ENCODE measurements at regions of chr9 and their contacts with region 1.

Region 1: GRCh38 chr9:22452415-22453010 is 5.9 kb downstream of the DMRTA1 start:
- DNase-seq: peak; percentile 31
- ATAC-seq: peak; percentile 83
- H3K4me3 ChIP-seq: no peak overlapping the region
- H3K27ac ChIP-seq: no peak overlapping the region
- H3K4me1 ChIP-seq: no peaks in the 10 kb centered on the region
- H3K27me3 ChIP-seq: peaks cover 9% of the 10 kb centered on the region
- CTCF ChIP-seq: peak; percentile 79
- POLR2A ChIP-seq: no peak
- RAD21 ChIP-seq: peak; percentile 64

Region 2: GRCh38 chr9:22060831-22061383 is 391.6 kb before region 1 on chr9:
- CTCF ChIA-PET with region 1: no interaction called
- POLR2A ChIA-PET with region 1: no interaction called
- dilution Hi-C with region 1: no loop called
- in situ Hi-C with region 1: no loop called
- intact Hi-C with region 1: loop called (anchors 10 kb)
- DNase-seq: no peak
- ATAC-seq: no peak
- H3K4me3 ChIP-seq: no peak overlapping the region
- H3K27ac ChIP-seq: no peak overlapping the region
- H3K4me1 ChIP-seq: no peaks in the 10 kb centered on the region
- H3K27me3 ChIP-seq: no peaks in the 10 kb centered on the region
- CTCF ChIP-seq: no peak
- POLR2A ChIP-seq: no peak
- RAD21 ChIP-seq: no peak

Region 3: DNA sequence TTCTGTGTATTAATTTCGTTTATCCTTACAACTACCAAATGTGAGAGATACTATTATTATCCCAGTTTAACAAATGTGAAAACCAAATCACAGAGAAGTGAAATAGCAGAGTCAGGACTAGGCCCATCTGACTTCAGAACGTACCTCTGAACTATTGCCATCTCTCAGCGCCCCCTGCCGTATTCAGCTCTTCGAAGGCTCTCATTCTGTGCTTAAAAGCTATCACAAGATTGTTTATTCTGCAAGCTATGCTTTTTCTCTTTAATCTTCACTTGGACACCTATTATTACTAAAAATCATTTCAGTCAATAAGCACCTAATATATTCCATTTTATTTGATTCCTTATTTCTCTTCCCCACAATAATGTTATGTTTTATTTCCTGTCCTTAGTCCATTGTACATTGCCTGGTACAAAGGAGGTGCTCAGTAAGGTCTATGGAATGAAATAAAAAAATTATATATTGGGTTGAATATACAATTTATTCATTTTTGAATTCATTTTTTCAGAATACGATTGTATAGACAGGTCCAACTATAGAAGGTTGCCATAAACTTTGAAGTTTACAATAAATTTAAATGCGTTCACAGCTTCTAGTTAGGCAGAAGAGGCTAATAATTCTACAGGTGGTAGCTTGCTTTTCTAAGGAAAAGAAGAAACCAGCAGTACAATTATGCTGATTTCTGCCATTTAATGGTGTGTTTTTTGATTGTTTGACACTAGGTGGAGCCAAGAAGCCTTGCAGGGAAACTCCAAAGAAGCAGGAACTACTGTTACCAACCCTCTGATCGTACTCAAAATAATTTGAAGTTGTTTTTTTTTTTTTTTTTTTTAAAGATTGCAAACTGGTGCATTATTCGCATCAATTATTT is 208.1 kb before region 1 on chr9:
- CTCF ChIA-PET with region 1: interaction called, 7 read pairs
- POLR2A ChIA-PET with region 1: no interaction called
- dilution Hi-C with region 1: no loop called
- in situ Hi-C with region 1: no loop called
- intact Hi-C with region 1: loop called (anchors 1 kb)
- DNase-seq: peak; percentile 63
- ATAC-seq: peak; percentile 92
- H3K4me3 ChIP-seq: no peak overlapping the region
- H3K27ac ChIP-seq: no peak overlapping the region
- H3K4me1 ChIP-seq: no peaks in the 10 kb centered on the region
- H3K27me3 ChIP-seq: peaks cover 3% of the 10 kb centered on the region
- CTCF ChIP-seq: peak; percentile 67
- POLR2A ChIP-seq: no peak
- RAD21 ChIP-seq: peak; percentile 67

Region 4: DNA sequence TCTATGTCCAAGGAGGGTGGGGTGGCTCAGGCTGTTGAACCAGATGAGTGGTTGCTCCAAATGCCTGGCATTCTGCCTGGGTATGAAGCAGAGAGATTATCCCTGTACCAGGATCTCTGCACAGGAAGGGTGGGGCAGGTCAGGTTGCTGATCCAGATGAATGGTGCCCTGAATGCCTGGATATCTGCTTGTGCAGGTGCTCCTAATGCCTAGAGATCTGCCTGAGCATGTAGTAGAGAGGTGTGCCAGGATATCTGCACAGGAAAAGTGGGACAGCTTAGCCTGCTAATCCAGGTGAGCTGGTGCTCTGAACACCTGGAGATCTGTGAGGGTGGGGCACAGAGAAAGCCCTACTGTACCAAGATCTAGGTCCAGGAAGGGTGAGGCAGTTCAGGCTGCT is 195.5 kb before region 1 on chr9:
- CTCF ChIA-PET with region 1: no interaction called
- POLR2A ChIA-PET with region 1: no interaction called
- dilution Hi-C with region 1: no loop called
- in situ Hi-C with region 1: loop called (anchors 10 kb)
- intact Hi-C with region 1: no loop called
- DNase-seq: no peak
- ATAC-seq: no peak
- H3K4me3 ChIP-seq: no peak overlapping the region
- H3K27ac ChIP-seq: no peak overlapping the region
- H3K4me1 ChIP-seq: no peaks in the 10 kb centered on the region
- H3K27me3 ChIP-seq: peaks cover 7% of the 10 kb centered on the region
- CTCF ChIP-seq: no peak
- POLR2A ChIP-seq: no peak
- RAD21 ChIP-seq: no peak

Region 5: DNA sequence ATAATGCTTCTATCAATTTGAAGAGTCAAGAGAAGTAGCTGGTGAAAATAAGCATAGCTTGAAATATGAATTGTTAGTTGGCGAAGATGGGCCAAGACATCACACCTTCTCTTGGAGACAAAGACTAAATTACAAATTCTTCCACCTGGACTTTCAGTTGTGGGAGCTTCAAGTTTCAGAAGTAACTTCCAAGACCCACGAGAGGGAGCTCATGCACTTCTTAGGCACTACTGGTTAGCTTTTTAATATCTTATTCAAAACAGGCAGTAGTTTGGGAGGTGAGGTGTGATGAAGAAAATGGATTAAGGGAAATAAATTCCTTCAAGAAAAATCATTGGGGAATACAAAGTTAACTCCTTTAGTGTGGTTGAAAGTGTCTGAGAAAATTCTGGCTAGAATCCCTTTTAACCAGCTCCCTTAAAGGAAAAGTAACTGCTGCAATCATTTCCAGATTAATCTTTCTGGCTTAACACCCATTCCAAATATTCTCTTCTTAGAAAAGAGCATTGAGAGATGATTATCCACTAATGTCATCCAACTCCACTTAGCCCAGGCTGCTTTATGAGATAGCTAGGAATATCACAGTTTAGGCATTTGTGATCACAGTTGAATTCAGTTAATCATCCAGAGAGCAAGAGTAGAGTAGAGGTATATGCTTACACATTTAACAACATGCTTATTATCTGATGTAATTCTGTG is 145.4 kb before region 1 on chr9:
- CTCF ChIA-PET with region 1: interaction called, 14 read pairs
- POLR2A ChIA-PET with region 1: no interaction called
- dilution Hi-C with region 1: no loop called
- in situ Hi-C with region 1: no loop called
- intact Hi-C with region 1: loop called (anchors 1 kb)
- DNase-seq: peak; percentile 55
- ATAC-seq: 0 out of 2 replicates have a peak, but pooled peaks have one; percentile 46
- H3K4me3 ChIP-seq: no peak overlapping the region
- H3K27ac ChIP-seq: no peak overlapping the region
- H3K4me1 ChIP-seq: no peaks in the 10 kb centered on the region
- H3K27me3 ChIP-seq: no peaks in the 10 kb centered on the region; the same call in 1 of the 2 replicates
- CTCF ChIP-seq: peak; percentile 69
- POLR2A ChIP-seq: no peak
- RAD21 ChIP-seq: peak; percentile 70